ENCODE measurements at regions of chr22 and their contacts with region 1.

Region 1: GRCh38 chr22:25334162-25334490 is 114.7 kb downstream of the CRYBB2 start:
- DNase-seq: peak in 1 of 2 experiments; percentile 94
- H3K4me3 ChIP-seq: no peak overlapping the region
- H3K27ac ChIP-seq: no peak overlapping the region
- H3K4me1 ChIP-seq: no peaks in the 10 kb centered on the region
- H3K27me3 ChIP-seq: no peaks in the 10 kb centered on the region
- CTCF ChIP-seq: peak; percentile 81 to 88 (median 82)
- EP300 ChIP-seq: no peak
- POLR2A ChIP-seq: no peak
- RAD21 ChIP-seq: peak; percentile 69 to 78

Region 2: DNA sequence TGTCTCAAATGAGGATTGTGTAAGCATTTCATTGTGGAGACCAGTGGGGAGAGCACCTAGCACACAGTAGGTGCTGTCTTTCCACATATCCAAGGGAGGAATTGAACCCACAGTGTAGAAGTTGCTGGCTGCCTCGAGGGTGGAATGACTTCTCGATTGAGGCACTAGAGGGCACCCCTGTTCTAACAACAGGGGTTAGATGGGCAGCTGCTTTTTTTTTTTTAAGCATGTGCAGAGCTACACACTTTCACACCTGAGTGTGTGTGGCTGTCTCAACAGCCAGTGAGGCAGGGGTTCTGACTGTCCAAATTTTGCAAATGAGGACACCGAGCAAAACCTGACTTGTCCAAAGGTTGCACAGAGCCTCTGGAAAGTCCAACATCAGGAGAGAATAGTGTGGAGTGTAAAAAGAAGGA is 252.7 kb before region 1 on chr22:
- CTCF ChIA-PET with region 1: interaction called, 10 read pairs
- POLR2A ChIA-PET with region 1: no interaction called
- DNase-seq: peak in 1 of 2 experiments; percentile 66
- H3K4me3 ChIP-seq: no peak overlapping the region
- H3K27ac ChIP-seq: no peak overlapping the region
- H3K4me1 ChIP-seq: peaks cover 0 to 3% (median 0%) of the 10 kb centered on the region in 4 experiments; a peak in 2 of 7 replicates
- H3K27me3 ChIP-seq: no peaks in the 10 kb centered on the region
- CTCF ChIP-seq: peak; percentile 69 to 79 (median 77)
- EP300 ChIP-seq: no peak
- POLR2A ChIP-seq: no peak
- RAD21 ChIP-seq: peak; percentile 89 to 90

Region 3: DNA sequence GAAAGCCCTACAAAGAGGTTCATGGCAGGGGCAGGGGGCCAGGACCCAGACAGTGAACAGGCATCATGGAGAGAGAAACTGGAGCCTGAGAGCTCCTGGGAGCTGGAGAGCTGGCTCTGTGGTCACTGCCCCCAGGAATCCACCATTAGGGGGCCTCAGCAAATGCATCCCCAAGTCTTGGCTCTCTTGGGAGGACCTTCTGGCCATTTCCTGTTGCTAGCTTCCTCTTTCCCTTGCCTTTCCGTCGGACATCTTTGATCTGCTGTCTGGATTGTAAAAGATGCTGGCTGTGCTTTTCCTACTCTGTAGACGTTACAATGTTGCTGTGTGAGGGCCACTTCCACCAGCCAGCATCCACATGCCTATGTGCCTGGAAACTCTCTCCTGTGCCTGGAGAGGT is 121.8 kb before region 1 on chr22:
- CTCF ChIA-PET with region 1: interaction called, 12 read pairs
- POLR2A ChIA-PET with region 1: no interaction called
- DNase-seq: no peak
- H3K4me3 ChIP-seq: no peak overlapping the region
- H3K27ac ChIP-seq: no peak overlapping the region
- H3K4me1 ChIP-seq: peaks cover 0 to 2% (median 0%) of the 10 kb centered on the region in 4 experiments; a peak in 1 of 7 replicates
- H3K27me3 ChIP-seq: no peaks in the 10 kb centered on the region
- CTCF ChIP-seq: peak; percentile 17 to 27 (median 22); a peak in 3 of 4 replicates
- EP300 ChIP-seq: no peak
- POLR2A ChIP-seq: no peak
- RAD21 ChIP-seq: no peak

Region 4: GRCh38 chr22:25235547-25236290 is 98.4 kb before region 1 on chr22:
- CTCF ChIA-PET with region 1: interaction called, 14 read pairs
- POLR2A ChIA-PET with region 1: interaction called, 3 read pairs
- DNase-seq: peak; percentile 66 to 93
- H3K4me3 ChIP-seq: no peak overlapping the region
- H3K27ac ChIP-seq: no peak overlapping the region
- H3K4me1 ChIP-seq: no peaks in the 10 kb centered on the region; a peak in 1 of 7 replicates
- H3K27me3 ChIP-seq: no peaks in the 10 kb centered on the region
- CTCF ChIP-seq: peak; percentile 95
- EP300 ChIP-seq: no peak
- POLR2A ChIP-seq: no peak
- RAD21 ChIP-seq: peak; percentile 97 to 99

Region 5: GRCh38 chr22:25362215-25362882 is 28.2 kb after region 1 on chr22:
- CTCF ChIA-PET with region 1: interaction called, 18 read pairs
- POLR2A ChIA-PET with region 1: interaction called, 3 read pairs
- DNase-seq: peak in 1 of 2 experiments; percentile 98
- H3K4me3 ChIP-seq: no peak overlapping the region
- H3K27ac ChIP-seq: no peak overlapping the region
- H3K4me1 ChIP-seq: no peaks in the 10 kb centered on the region
- H3K27me3 ChIP-seq: no peaks in the 10 kb centered on the region
- CTCF ChIP-seq: peak; percentile 91 to 97 (median 96)
- EP300 ChIP-seq: no peak
- POLR2A ChIP-seq: no peak
- RAD21 ChIP-seq: peak; percentile 91 to 93

Region 6: GRCh38 chr22:25509374-25509791 is 175.3 kb after region 1 on chr22:
- CTCF ChIA-PET with region 1: no interaction called
- POLR2A ChIA-PET with region 1: no interaction called
- DNase-seq: no peak
- H3K4me3 ChIP-seq: no peak overlapping the region
- H3K27ac ChIP-seq: no peak overlapping the region
- H3K4me1 ChIP-seq: peaks cover 0 to 8% (median 4%) of the 10 kb centered on the region in 4 experiments; a peak in 2 of 7 replicates
- H3K27me3 ChIP-seq: no peaks in the 10 kb centered on the region
- CTCF ChIP-seq: no peak
- EP300 ChIP-seq: no peak
- POLR2A ChIP-seq: no peak
- RAD21 ChIP-seq: no peak

Region 7: GRCh38 chr22:25598609-25599008 is 264.5 kb after region 1 on chr22:
- CTCF ChIA-PET with region 1: no interaction called
- POLR2A ChIA-PET with region 1: no interaction called
- DNase-seq: no peak
- H3K4me3 ChIP-seq: no peak overlapping the region
- H3K27ac ChIP-seq: no peak overlapping the region
- H3K4me1 ChIP-seq: no peaks in the 10 kb centered on the region
- H3K27me3 ChIP-seq: no peaks in the 10 kb centered on the region
- CTCF ChIP-seq: no peak
- EP300 ChIP-seq: no peak
- POLR2A ChIP-seq: no peak
- RAD21 ChIP-seq: no peak

Measured in H1 (cell line).